Psoas muscle (tissue), 8 donors: ENCODE measurements at regions of chr2 and their contacts with region 1.

Region 1: DNA sequence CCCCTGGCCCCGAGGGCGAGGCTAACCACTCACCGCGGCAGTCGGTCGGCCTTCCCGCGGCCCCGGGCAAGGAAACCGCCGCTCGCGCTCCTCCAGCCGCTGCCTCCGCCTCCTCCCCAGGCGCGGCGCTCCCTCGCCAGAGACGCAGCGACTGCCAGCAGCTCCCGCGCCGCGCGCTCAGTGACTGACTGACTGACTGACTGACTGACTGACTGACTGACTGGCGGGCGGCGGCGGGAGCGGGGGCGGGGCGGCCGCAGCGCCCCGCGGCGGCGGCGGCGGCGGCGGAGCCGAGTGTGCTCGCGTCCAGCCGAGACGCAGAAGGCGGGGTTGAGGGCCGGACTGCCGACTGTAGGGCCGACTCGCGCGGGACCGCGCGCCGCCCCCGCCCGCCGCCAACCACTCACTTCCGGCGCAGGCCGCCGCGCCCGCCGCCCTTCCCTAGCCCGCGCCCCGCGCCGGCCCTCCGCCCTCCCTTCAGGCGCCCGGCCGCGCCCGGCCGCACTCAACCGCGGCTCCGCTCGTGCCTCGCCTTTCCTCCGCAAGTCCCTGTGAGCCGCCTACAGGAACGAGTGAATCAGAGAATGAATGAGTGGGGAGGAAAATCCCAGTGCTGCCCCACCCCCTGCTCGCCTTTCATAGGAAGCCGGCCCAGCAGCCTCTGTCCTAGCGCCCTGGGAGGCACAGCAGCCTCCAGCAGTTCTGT is at the start of gene RAPH1:
- DNase-seq: peak; percentile 89 to 92
- ATAC-seq: peak; percentile 88 to 92 (median 91)
- H3K4me3 ChIP-seq: peak within 1 kb of the TSS; percentile 80
- H3K27ac ChIP-seq: peak within 1 kb of the TSS; percentile 86
- H3K4me1 ChIP-seq: peaks cover 7% of the 10 kb centered on the region
- H3K27me3 ChIP-seq: no peaks in the 10 kb centered on the region
- CTCF ChIP-seq: peak; percentile 6
- total RNA-seq, gene RAPH1: 21.9 to 47.6 (median 38.0) TPM

Region 2: DNA sequence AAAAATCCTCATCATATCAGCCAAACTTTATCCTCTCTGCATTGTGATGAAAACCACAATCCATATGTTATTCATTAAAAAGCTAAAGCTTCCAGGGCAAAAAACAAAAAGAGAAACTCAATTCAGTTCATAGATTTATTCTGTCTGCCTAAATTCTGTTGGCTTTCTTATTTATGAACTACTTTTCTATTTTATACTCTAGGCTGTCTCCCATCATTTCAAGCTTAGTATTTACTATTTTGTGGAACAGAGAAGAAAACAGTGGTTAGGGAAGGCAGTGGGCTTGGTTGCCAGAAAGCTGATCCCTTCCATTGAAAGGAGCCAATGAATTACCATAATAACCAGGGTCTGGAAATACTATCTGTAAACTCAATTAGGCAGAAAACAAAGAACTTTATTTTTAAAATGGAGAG is 72.0 kb before region 1 on chr2:
- intact Hi-C with region 1: no loop called
- DNase-seq: no peak
- ATAC-seq: no peak
- H3K4me3 ChIP-seq: no peak overlapping the region
- H3K27ac ChIP-seq: no peak overlapping the region
- H3K4me1 ChIP-seq: no peaks in the 10 kb centered on the region
- H3K27me3 ChIP-seq: no peaks in the 10 kb centered on the region
- CTCF ChIP-seq: no peak

Region 3: GRCh38 chr2:203583701-203584100 is 48.5 kb after region 1 on chr2:
- intact Hi-C with region 1: loop called in 1 of 2 experiments (anchors 2 kb)
- DNase-seq: no peak
- ATAC-seq: peak; percentile 88 to 93 (median 92)
- H3K4me3 ChIP-seq: no peak overlapping the region
- H3K27ac ChIP-seq: peak overlapping the region; percentile 73
- H3K4me1 ChIP-seq: peaks cover 43% of the 10 kb centered on the region
- H3K27me3 ChIP-seq: no peaks in the 10 kb centered on the region
- CTCF ChIP-seq: no peak

Region 4: DNA sequence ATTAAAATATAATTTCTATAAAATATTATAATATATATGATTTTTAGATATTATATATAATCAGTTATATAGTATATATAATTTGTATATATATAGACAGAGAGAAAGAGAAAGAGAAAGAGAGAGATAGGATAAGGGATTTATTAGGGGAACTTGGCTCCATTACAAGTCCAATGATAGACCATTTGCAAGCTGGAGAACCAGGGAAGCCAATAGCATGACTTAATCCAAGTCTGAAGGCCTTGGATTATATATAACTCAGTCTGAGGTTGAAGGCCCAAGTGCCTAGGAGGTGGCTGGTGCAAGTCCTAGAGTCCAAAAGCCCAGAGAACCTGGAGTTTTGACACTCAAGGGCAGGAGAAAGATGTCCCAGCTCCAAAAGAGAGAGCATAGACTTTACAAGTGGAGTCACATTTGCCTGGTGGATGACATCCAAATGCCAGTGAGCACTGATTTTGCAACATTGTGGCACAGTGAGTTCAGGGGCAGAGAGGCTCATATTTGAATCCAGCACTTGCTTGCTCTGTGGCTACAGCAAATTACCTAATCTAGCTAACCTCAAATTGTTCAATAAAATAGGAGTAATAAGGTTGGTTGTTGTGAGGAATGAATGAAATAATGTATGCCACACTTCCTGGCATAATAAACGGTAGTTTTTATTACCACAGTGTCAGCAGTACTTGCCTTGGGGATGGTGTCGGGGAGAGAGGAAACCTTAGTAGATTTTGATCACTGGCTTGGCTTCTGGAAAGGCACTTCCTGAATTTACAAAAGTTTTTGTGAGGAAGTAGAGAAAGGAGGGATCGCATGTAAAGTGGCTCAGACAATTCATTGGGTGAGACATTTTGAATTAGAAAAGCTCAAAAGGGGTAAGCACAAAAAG is 101.6 kb after region 1 on chr2:
- intact Hi-C with region 1: loop called in 1 of 2 experiments (anchors 5 kb)
- DNase-seq: no peak
- ATAC-seq: peak; percentile 81 to 99 (median 90)
- H3K4me3 ChIP-seq: no peak overlapping the region
- H3K27ac ChIP-seq: peak overlapping the region; percentile 47
- H3K4me1 ChIP-seq: peaks cover 16% of the 10 kb centered on the region
- H3K27me3 ChIP-seq: no peaks in the 10 kb centered on the region
- CTCF ChIP-seq: no peak